Activated CD4-positive, alpha-beta memory T cell treated with anti-CD3 and anti-CD28 coated beads, Interleukin-2, amount 10 ng/mL, durations not matched to agents 7 days and 5 days (primary cell): ENCODE measurements at regions of chr2 and their contacts with region 1.

Region 1: GRCh38 chr2:230068016-230068650 is 591 bp downstream of the SLC16A14 start:
- DNase-seq: peak; percentile 48
- H3K4me3 Mint-ChIP-seq: peak overlapping the region; percentile 77
- H3K27ac Mint-ChIP-seq: no peak overlapping the region
- H3K4me1 Mint-ChIP-seq: peaks cover 21% of the 10 kb centered on the region
- H3K27me3 Mint-ChIP-seq: peaks cover 30% of the 10 kb centered on the region

Region 2: DNA sequence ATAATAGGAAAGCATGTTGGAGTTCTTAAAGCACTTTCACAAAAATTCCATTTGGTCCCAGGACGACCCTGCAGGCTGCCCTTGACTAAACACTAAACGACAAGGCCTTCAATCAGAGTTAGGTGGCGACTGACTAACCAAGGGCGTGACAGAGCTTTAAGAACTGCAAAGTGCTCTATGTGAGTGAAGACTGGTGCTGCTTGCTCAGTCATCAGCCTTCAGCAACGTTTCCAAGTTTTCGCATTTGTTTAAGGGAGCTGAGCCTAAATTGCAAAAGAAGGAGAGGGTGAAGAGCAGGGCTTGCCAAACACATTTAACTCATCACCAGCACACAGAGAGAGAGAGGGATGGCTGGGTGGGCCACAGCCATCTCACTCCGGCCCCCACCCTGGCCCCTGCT is 592.4 kb before region 1 on chr2:
- CTCF ChIA-PET with region 1: no interaction called
- POLR2A ChIA-PET with region 1: no interaction called
- DNase-seq: no peak
- H3K4me3 Mint-ChIP-seq: no peak overlapping the region
- H3K27ac Mint-ChIP-seq: no peak overlapping the region
- H3K4me1 Mint-ChIP-seq: no peaks in the 10 kb centered on the region
- H3K27me3 Mint-ChIP-seq: no peaks in the 10 kb centered on the region

Region 3: DNA sequence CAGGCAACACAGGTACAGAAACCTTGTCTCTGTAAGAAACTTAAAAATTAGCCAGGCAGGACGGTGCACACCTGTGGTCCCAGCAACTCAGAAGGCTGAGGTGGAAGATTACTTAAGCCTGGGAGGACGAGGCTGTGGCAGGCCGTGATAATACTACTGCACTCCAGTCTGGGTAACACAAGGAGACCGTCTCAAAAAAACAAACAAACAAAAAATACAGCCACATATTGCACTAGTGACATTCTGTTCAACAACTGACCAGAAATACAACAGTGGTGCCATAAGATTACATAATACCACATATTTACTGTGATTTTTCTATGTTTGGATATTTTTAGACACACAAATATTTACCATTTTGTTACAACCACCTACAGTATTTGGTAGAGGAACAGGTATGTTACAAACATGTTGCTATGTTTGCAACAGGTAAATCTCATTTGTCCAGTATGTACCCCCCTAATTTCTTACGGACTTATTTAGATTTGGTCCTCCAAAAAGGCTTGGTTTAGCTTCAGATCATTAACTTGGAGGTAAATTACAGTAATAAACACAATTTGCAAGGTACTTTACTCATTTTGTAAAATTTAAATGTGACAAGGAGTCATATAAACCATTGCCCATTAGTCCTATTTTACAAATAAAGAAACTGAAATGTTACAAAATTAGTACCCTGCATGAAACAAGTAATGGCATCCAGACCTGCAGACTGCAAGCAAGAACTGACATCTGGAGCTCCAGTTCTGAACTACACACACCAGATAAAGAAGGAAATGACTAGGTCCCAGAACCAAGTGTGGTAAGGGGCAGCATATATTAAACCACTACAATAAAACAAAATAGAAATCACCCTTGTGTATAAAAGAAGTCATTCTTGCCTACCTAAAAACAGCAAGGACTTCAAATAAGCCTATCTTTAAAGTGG is 183.1 kb before region 1 on chr2:
- CTCF ChIA-PET with region 1: no interaction called
- POLR2A ChIA-PET with region 1: no interaction called
- DNase-seq: no peak
- H3K4me3 Mint-ChIP-seq: no peak overlapping the region
- H3K27ac Mint-ChIP-seq: no peak overlapping the region
- H3K4me1 Mint-ChIP-seq: peaks cover 10% of the 10 kb centered on the region
- H3K27me3 Mint-ChIP-seq: no peaks in the 10 kb centered on the region

Region 4: GRCh38 chr2:229937523-229937922 is 130.6 kb before region 1 on chr2:
- CTCF ChIA-PET with region 1: no interaction called
- POLR2A ChIA-PET with region 1: no interaction called
- DNase-seq: no peak
- H3K4me3 Mint-ChIP-seq: no peak overlapping the region
- H3K27ac Mint-ChIP-seq: no peak overlapping the region
- H3K4me1 Mint-ChIP-seq: peaks cover 3% of the 10 kb centered on the region
- H3K27me3 Mint-ChIP-seq: no peaks in the 10 kb centered on the region

Region 5: GRCh38 chr2:230007931-230008707 is 60.0 kb before region 1 on chr2:
- CTCF ChIA-PET with region 1: interaction called, 20 read pairs
- POLR2A ChIA-PET with region 1: no interaction called
- DNase-seq: peak; percentile 83
- H3K4me3 Mint-ChIP-seq: no peak overlapping the region
- H3K27ac Mint-ChIP-seq: no peak overlapping the region
- H3K4me1 Mint-ChIP-seq: peaks cover 7% of the 10 kb centered on the region
- H3K27me3 Mint-ChIP-seq: no peaks in the 10 kb centered on the region

Region 6: DNA sequence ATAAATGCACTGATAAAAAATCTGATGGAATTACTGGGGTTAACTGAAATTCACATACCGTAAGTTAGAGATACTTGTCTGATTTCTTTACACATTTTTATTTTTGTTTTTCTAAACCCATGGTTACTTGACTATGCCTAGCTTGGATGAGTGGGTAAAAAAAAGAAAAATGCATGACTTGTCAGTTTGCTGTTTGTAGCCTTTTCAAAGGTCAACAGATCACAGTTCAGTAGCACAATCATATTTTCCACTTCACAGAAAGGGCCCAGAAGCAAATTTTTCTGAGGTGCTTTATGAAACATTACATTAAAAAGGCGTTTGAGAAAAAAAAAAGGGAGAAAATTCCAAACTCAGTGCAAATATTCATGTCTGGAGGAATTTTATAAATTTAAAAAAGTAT is 15.8 kb before region 1 on chr2:
- CTCF ChIA-PET with region 1: interaction called, 20 read pairs
- POLR2A ChIA-PET with region 1: interaction called, 3 read pairs
- DNase-seq: no peak
- H3K4me3 Mint-ChIP-seq: no peak overlapping the region
- H3K27ac Mint-ChIP-seq: no peak overlapping the region
- H3K4me1 Mint-ChIP-seq: no peaks in the 10 kb centered on the region
- H3K27me3 Mint-ChIP-seq: no peaks in the 10 kb centered on the region

Region 7: GRCh38 chr2:230085201-230085600 is 17.1 kb after region 1 on chr2:
- CTCF ChIA-PET with region 1: interaction called, 15 read pairs
- POLR2A ChIA-PET with region 1: no interaction called
- DNase-seq: no peak
- H3K4me3 Mint-ChIP-seq: no peak overlapping the region
- H3K27ac Mint-ChIP-seq: no peak overlapping the region
- H3K4me1 Mint-ChIP-seq: no peaks in the 10 kb centered on the region
- H3K27me3 Mint-ChIP-seq: peaks cover 2% of the 10 kb centered on the region